Prostate gland (tissue), 2 donors: ENCODE measurements at regions of chr7 and their contacts with region 1.

Region 1: GRCh38 chr7:75866489-75867389 is 12.1 kb upstream of the RHBDD2 start:
- DNase-seq: peak; percentile 55
- H3K4me3 ChIP-seq: no peak overlapping the region
- H3K27ac ChIP-seq: no peak overlapping the region
- H3K4me1 ChIP-seq: no peaks in the 10 kb centered on the region
- H3K27me3 ChIP-seq: no peaks in the 10 kb centered on the region
- CTCF ChIP-seq: peak; percentile 62 to 94 (median 88)
- POLR2A ChIP-seq: no peak

Region 2: GRCh38 chr7:75814407-75814947 is 52.3 kb before region 1 on chr7:
- intact Hi-C with region 1: no loop called
- DNase-seq: no peak
- H3K4me3 ChIP-seq: no peak overlapping the region
- H3K27ac ChIP-seq: no peak overlapping the region
- H3K4me1 ChIP-seq: no peaks in the 10 kb centered on the region
- H3K27me3 ChIP-seq: no peaks in the 10 kb centered on the region
- CTCF ChIP-seq: no peak
- POLR2A ChIP-seq: no peak

Region 3: GRCh38 chr7:76020031-76020714 is 153.4 kb after region 1 on chr7:
- intact Hi-C with region 1: loop called (anchors 1 kb)
- DNase-seq: peak; percentile 62
- H3K4me3 ChIP-seq: no peak overlapping the region
- H3K27ac ChIP-seq: no peak overlapping the region
- H3K4me1 ChIP-seq: no peaks in the 10 kb centered on the region
- H3K27me3 ChIP-seq: no peaks in the 10 kb centered on the region
- CTCF ChIP-seq: peak; percentile 43 to 93 (median 91)
- POLR2A ChIP-seq: no peak